B cell (primary cell): ENCODE measurements at regions of chr14 and their contacts with region 1.

Region 1: GRCh38 chr14:89767861-89768268 is 186.7 kb downstream of the EFCAB11 start:
- DNase-seq: peak; percentile 83
- ATAC-seq: peak; percentile 88
- H3K4me3 ChIP-seq: peak overlapping the region in 1 of 5 experiments; percentile 23
- H3K4me3 Mint-ChIP-seq: peak overlapping the region; percentile 26
- H3K27ac ChIP-seq: peak overlapping the region in 1 of 2 donors; percentile 52
- H3K27ac Mint-ChIP-seq: peak overlapping the region; percentile 54
- H3K4me1 ChIP-seq: peaks cover 17 to 19% of the 10 kb centered on the region in 2 donors
- H3K4me1 Mint-ChIP-seq: peaks cover 29% of the 10 kb centered on the region
- H3K27me3 ChIP-seq: no peaks in the 10 kb centered on the region
- H3K27me3 Mint-ChIP-seq: no peaks in the 10 kb centered on the region
- CTCF ChIP-seq: peak; percentile 82

Region 2: DNA sequence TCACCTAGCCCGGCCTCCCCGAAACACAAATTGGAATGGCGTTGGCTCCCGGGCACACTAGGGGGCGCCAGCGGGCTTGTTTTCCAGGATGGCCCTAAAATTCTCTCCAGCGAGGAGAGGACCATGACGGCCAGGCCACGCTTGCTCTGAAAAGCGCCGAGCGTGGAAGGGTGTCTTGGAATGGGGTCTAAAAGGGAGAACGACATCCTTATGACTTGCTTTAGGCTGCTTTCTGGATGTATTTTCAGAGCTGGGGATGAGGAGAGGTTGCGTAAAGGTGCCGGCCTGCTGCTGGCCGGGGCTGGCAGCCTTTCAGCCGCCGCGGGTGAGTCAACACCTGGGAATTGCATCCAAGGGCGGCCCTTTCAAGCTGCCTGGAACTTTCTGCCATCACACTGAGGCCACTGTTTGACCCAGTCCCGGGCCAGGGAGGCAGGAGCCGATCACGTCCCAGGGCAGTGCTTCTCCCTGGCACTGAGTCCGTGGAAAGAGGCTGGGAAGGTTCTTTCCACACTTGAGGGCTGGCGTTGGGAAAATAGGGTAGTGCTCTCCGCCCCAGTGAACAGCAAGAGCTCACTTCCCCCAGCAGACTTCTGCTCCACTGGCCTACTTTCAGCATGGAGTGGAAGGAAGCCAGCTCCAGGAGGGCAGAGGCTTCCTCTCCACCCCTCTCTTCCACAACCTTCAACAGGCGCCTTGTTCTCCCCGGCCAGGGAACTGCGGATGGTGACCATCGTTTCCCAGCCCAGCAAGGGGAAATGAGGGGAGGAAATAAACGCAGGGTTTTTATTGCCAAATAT is 727.2 kb before region 1 on chr14:
- CTCF ChIA-PET with region 1: interaction called, 25 read pairs
- POLR2A ChIA-PET with region 1: no interaction called
- intact Hi-C with region 1: loop called (anchors 1 kb)
- DNase-seq: peak; percentile 79
- ATAC-seq: peak; percentile 68
- H3K4me3 ChIP-seq: peak overlapping the region in 4 of 5 experiments; percentile 35 to 63 (median 42)
- H3K4me3 Mint-ChIP-seq: peak overlapping the region; percentile 85
- H3K27ac ChIP-seq: no peak overlapping the region
- H3K27ac Mint-ChIP-seq: no peak overlapping the region
- H3K4me1 ChIP-seq: peaks cover 15% of the 10 kb centered on the region in 2 donors
- H3K4me1 Mint-ChIP-seq: peaks cover 15% of the 10 kb centered on the region
- H3K27me3 ChIP-seq: peaks cover 0 to 12% (median 7%) of the 10 kb centered on the region in 4 experiments
- H3K27me3 Mint-ChIP-seq: peaks cover 47% of the 10 kb centered on the region
- CTCF ChIP-seq: peak; percentile 85

Region 3: DNA sequence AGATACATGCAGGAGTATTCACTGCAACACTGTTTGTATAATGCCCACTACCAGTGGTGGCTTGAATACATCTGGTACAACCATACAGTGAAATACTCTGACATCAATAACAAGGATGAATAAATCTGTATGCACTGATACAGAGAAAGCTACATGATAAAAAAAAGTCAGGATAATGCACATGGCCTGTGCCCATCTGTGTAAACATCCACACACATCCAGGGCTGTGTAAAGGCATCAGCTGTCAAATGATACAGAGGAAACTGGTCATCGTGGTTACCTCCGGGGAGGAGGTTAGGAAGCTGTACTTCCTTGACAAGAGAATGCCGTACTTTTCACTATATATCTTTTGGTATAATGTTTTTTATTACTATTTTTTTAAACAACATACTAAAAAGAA is 527.5 kb before region 1 on chr14:
- CTCF ChIA-PET with region 1: interaction called, 3 read pairs
- POLR2A ChIA-PET with region 1: no interaction called
- intact Hi-C with region 1: loop called (anchors 5 kb)
- DNase-seq: no peak
- ATAC-seq: no peak
- H3K4me3 ChIP-seq: no peak overlapping the region
- H3K4me3 Mint-ChIP-seq: no peak overlapping the region
- H3K27ac ChIP-seq: no peak overlapping the region
- H3K27ac Mint-ChIP-seq: no peak overlapping the region
- H3K4me1 ChIP-seq: peaks cover 31 to 37% of the 10 kb centered on the region in 2 donors
- H3K4me1 Mint-ChIP-seq: peaks cover 59% of the 10 kb centered on the region
- H3K27me3 ChIP-seq: no peaks in the 10 kb centered on the region
- H3K27me3 Mint-ChIP-seq: no peaks in the 10 kb centered on the region
- CTCF ChIP-seq: no peak

Region 4: GRCh38 chr14:89384023-89384422 is 383.8 kb before region 1 on chr14:
- CTCF ChIA-PET with region 1: interaction called, 4 read pairs
- POLR2A ChIA-PET with region 1: no interaction called
- intact Hi-C with region 1: loop called (anchors 1 kb)
- DNase-seq: peak; percentile 95
- ATAC-seq: peak; percentile 96
- H3K4me3 ChIP-seq: peak overlapping the region in 1 of 5 experiments; percentile 35
- H3K4me3 Mint-ChIP-seq: peak overlapping the region; percentile 46
- H3K27ac ChIP-seq: peak overlapping the region; percentile 69 to 72
- H3K27ac Mint-ChIP-seq: peak overlapping the region; percentile 86
- H3K4me1 ChIP-seq: peaks cover 58 to 65% of the 10 kb centered on the region in 2 donors
- H3K4me1 Mint-ChIP-seq: peaks cover 70% of the 10 kb centered on the region
- H3K27me3 ChIP-seq: no peaks in the 10 kb centered on the region
- H3K27me3 Mint-ChIP-seq: no peaks in the 10 kb centered on the region
- CTCF ChIP-seq: no peak

Region 5: GRCh38 chr14:89701211-89702043 is 66.4 kb before region 1 on chr14:
- CTCF ChIA-PET with region 1: no interaction called
- POLR2A ChIA-PET with region 1: no interaction called
- intact Hi-C with region 1: loop called (anchors 5 kb)
- DNase-seq: peak; percentile 90
- ATAC-seq: peak; percentile 96
- H3K4me3 ChIP-seq: peak overlapping the region; percentile 4 to 80 (median 62)
- H3K4me3 Mint-ChIP-seq: peak overlapping the region; percentile 88
- H3K27ac ChIP-seq: peak overlapping the region; percentile 28 to 71
- H3K27ac Mint-ChIP-seq: peak overlapping the region; percentile 85
- H3K4me1 ChIP-seq: peaks cover 25% of the 10 kb centered on the region in 2 donors
- H3K4me1 Mint-ChIP-seq: peaks cover 25% of the 10 kb centered on the region
- H3K27me3 ChIP-seq: no peaks in the 10 kb centered on the region
- H3K27me3 Mint-ChIP-seq: no peaks in the 10 kb centered on the region
- CTCF ChIP-seq: no peak

Region 6: DNA sequence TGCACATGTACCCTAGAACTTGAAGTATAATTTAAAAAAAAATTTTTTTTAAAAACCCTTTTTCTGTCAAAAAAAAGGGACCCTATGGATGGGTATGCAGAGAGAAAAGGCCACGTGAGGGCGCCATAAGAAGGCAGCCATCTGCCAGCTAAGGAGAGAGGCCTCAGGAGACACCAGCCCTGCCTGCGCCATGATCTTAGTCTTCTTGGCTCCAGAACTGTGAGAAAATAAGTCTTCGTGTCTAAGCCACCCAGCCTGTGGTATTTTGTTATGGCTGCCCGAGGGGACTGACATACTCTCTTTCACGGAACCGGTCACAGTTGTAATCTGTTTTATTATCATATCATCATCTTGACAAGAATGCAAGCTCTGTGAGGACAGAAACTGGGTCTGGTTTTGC is 11.8 kb after region 1 on chr14:
- CTCF ChIA-PET with region 1: no interaction called
- POLR2A ChIA-PET with region 1: no interaction called
- intact Hi-C with region 1: no loop called
- DNase-seq: no peak
- ATAC-seq: no peak
- H3K4me3 ChIP-seq: no peak overlapping the region
- H3K4me3 Mint-ChIP-seq: no peak overlapping the region
- H3K27ac ChIP-seq: no peak overlapping the region
- H3K27ac Mint-ChIP-seq: no peak overlapping the region
- H3K4me1 ChIP-seq: no peaks in the 10 kb centered on the region
- H3K4me1 Mint-ChIP-seq: no peaks in the 10 kb centered on the region
- H3K27me3 ChIP-seq: no peaks in the 10 kb centered on the region
- H3K27me3 Mint-ChIP-seq: no peaks in the 10 kb centered on the region
- CTCF ChIP-seq: no peak

Region 7: DNA sequence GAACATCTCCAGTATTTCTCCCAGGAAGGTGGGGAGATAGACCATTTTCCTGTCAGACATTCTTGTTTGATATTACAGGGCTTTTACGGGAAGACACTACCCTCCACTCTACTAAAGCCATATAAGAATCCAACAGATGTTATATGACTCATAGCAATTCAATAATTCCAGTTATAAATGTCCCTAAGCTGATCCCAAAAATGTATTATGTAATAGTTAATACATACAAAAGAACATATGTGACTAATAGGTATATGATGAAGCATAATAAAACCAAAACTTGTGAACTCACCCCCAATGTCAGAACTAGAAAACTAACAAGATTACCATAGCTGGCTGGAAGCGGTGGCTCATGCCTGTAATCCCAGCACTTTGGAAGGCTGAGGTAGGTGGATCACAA is 102.5 kb after region 1 on chr14:
- CTCF ChIA-PET with region 1: no interaction called
- POLR2A ChIA-PET with region 1: no interaction called
- intact Hi-C with region 1: no loop called
- DNase-seq: no peak
- ATAC-seq: no peak
- H3K4me3 ChIP-seq: no peak overlapping the region
- H3K4me3 Mint-ChIP-seq: no peak overlapping the region
- H3K27ac ChIP-seq: no peak overlapping the region
- H3K27ac Mint-ChIP-seq: no peak overlapping the region
- H3K4me1 ChIP-seq: no peaks in the 10 kb centered on the region
- H3K4me1 Mint-ChIP-seq: no peaks in the 10 kb centered on the region
- H3K27me3 ChIP-seq: no peaks in the 10 kb centered on the region
- H3K27me3 Mint-ChIP-seq: no peaks in the 10 kb centered on the region
- CTCF ChIP-seq: no peak

Region 8: GRCh38 chr14:89909586-89909985 is 141.7 kb after region 1 on chr14:
- CTCF ChIA-PET with region 1: no interaction called
- POLR2A ChIA-PET with region 1: no interaction called
- intact Hi-C with region 1: no loop called
- DNase-seq: no peak
- ATAC-seq: no peak
- H3K4me3 ChIP-seq: no peak overlapping the region
- H3K4me3 Mint-ChIP-seq: no peak overlapping the region
- H3K27ac ChIP-seq: no peak overlapping the region
- H3K27ac Mint-ChIP-seq: no peak overlapping the region
- H3K4me1 ChIP-seq: no peaks in the 10 kb centered on the region
- H3K4me1 Mint-ChIP-seq: no peaks in the 10 kb centered on the region
- H3K27me3 ChIP-seq: no peaks in the 10 kb centered on the region
- H3K27me3 Mint-ChIP-seq: no peaks in the 10 kb centered on the region
- CTCF ChIP-seq: no peak